Common myeloid progenitor, CD34-positive (primary cell): ENCODE measurements at regions of chr17 and their contacts with region 1.

Region 1: GRCh38 chr17:80008383-80008840 is 27.3 kb downstream of the TBC1D16 start:
- DNase-seq: peak; percentile 59 to 76 (median 67)
- H3K4me3 ChIP-seq: no peak overlapping the region
- H3K27ac ChIP-seq: no peak overlapping the region
- H3K4me1 ChIP-seq: peaks cover 0 to 8% (median 1%) of the 10 kb centered on the region in 4 experiments
- H3K27me3 ChIP-seq: no peaks in the 10 kb centered on the region

Region 2: GRCh38 chr17:79991140-79991923 is 17.1 kb before region 1 on chr17:
- CTCF ChIA-PET with region 1: interaction called, 16 read pairs
- POLR2A ChIA-PET with region 1: no interaction called
- DNase-seq: peak; percentile 82 to 86 (median 84)
- H3K4me3 ChIP-seq: peak overlapping the region in 5 of 7 experiments; percentile 13 to 80 (median 57)
- H3K27ac ChIP-seq: no peak overlapping the region
- H3K4me1 ChIP-seq: peaks cover 14 to 35% (median 25%) of the 10 kb centered on the region in 4 experiments
- H3K27me3 ChIP-seq: no peaks in the 10 kb centered on the region

Region 3: DNA sequence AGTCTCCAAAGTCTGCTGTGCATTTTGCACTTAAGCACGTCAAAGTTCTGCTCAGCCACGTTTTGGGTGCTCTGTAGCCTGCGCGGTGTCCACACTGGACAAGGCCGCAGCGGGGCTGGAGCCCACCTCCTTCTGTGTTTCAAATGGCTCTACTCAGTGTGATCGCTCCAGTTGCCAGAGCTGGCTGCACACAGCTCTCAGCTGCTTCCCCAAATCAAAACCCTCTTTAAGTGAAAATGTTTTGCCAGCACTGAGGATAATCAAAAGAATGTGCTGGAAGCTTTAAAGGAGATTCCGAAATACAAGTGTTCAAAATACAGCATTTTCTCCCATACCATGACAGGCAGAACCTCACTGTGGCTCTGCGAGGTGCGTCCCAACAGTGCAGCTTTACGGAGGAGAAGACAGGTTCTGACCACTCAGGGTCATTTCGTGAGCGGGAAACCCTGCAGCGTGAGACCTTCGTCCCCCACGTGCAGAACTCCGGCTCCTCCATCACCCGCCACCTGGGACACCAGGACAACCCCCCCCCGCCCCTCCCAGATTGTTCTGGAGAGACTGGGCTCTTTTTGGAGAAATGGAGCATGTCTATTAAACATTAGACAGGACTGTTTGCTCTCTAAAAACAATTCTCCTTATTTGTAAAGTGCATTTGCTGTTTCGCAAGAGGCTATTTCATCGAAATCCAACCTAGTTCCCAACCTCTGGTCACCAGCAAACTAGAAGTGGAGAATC is 10.7 kb after region 1 on chr17:
- CTCF ChIA-PET with region 1: interaction called, 18 read pairs
- POLR2A ChIA-PET with region 1: no interaction called
- DNase-seq: no peak
- H3K4me3 ChIP-seq: no peak overlapping the region
- H3K27ac ChIP-seq: no peak overlapping the region
- H3K4me1 ChIP-seq: peaks cover 0 to 3% (median 0%) of the 10 kb centered on the region in 4 experiments
- H3K27me3 ChIP-seq: no peaks in the 10 kb centered on the region

Region 4: GRCh38 chr17:80029258-80029974 is 21.0 kb after region 1 on chr17:
- CTCF ChIA-PET with region 1: interaction called, 64 read pairs
- POLR2A ChIA-PET with region 1: interaction called, 3 read pairs
- DNase-seq: peak; percentile 22 to 61 (median 57)
- H3K4me3 ChIP-seq: no peak overlapping the region
- H3K27ac ChIP-seq: no peak overlapping the region
- H3K4me1 ChIP-seq: peaks cover 0 to 20% (median 8%) of the 10 kb centered on the region in 4 experiments
- H3K27me3 ChIP-seq: no peaks in the 10 kb centered on the region

Region 5: DNA sequence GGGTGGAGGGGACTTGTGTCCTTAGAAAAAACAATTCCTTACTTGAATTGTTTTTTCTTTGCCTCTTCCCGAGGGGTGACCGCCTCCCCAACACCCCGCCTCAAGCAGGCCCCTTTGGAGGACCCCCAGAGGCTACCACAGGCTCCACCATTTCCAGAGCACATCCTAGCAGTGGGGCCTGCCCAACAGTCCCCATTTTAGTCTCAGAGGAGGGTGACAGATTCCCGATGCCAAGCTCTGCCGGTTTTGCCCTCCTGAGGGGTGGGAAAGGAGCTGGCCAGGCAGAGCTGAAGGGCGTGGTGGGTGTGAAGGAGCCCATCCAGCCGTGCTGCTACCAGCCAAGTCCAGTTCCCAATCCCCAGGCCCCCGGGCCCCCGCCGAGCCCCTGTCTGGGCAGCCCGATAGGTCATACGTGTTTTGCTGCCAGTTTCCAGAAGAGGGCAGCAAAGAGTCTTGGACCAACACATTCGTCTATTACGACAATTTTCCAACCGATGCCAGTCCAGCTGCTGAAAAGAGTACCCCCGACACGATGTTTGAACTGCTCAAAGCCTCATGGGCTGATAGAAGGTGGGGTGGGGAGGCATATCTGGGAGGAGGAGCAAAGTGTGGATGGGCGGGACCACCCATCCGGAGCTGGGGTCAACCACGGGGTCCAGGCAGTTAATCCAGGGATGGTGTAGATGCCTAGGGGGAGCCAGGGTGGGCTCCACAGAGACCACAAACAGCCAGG is 74.2 kb after region 1 on chr17:
- CTCF ChIA-PET with region 1: interaction called, 12 read pairs
- POLR2A ChIA-PET with region 1: no interaction called
- DNase-seq: peak; percentile 75 to 83 (median 80)
- H3K4me3 ChIP-seq: no peak overlapping the region
- H3K27ac ChIP-seq: no peak overlapping the region
- H3K4me1 ChIP-seq: peaks cover 0 to 4% (median 2%) of the 10 kb centered on the region in 4 experiments
- H3K27me3 ChIP-seq: peaks cover 0 to 5% (median 0%) of the 10 kb centered on the region in 5 experiments